T-cell (primary cell): ENCODE measurements at regions of chr1 and their contacts with region 1.

Region 1: GRCh38 chr1:198676253-198676652 is 37.4 kb downstream of the PTPRC start:
- DNase-seq: peak in 1 of 35 experiments; percentile 74
- ATAC-seq: peak in 2 of 4 experiments; percentile 18 to 32
- H3K4me3 ChIP-seq: peak overlapping the region; percentile 1 to 8
- H3K4me3 Mint-ChIP-seq: peak overlapping the region; percentile 69 to 76 (median 73)
- H3K27ac ChIP-seq: peak overlapping the region; percentile 94
- H3K27ac Mint-ChIP-seq: peak overlapping the region; percentile 91 to 99
- H3K4me1 ChIP-seq: peaks cover 39 to 69% of the 10 kb centered on the region in 2 experiments
- H3K4me1 Mint-ChIP-seq: peaks cover 85 to 92% (median 91%) of the 10 kb centered on the region in 3 donors
- H3K27me3 ChIP-seq: no peaks in the 10 kb centered on the region
- H3K27me3 Mint-ChIP-seq: no peaks in the 10 kb centered on the region

Region 2: GRCh38 chr1:198651650-198652400 is 24.4 kb before region 1 on chr1:
- CTCF ChIA-PET with region 1: interaction called, 5 to 31 read pairs
- POLR2A ChIA-PET with region 1: interaction called, 6 to 49 read pairs
- DNase-seq: no peak
- ATAC-seq: peak; percentile 27 to 34 (median 31)
- H3K4me3 ChIP-seq: peak overlapping the region in 1 of 2 donors; percentile 27
- H3K4me3 Mint-ChIP-seq: peak overlapping the region; percentile 63 to 81 (median 76)
- H3K27ac ChIP-seq: peak overlapping the region; percentile 87
- H3K27ac Mint-ChIP-seq: peak overlapping the region; percentile 94 to 98
- H3K4me1 ChIP-seq: peaks cover 20 to 80% of the 10 kb centered on the region in 2 experiments
- H3K4me1 Mint-ChIP-seq: peaks cover 81 to 85% (median 83%) of the 10 kb centered on the region in 3 donors
- H3K27me3 ChIP-seq: no peaks in the 10 kb centered on the region
- H3K27me3 Mint-ChIP-seq: no peaks in the 10 kb centered on the region

Region 3: GRCh38 chr1:198701766-198702539 is 25.7 kb after region 1 on chr1:
- CTCF ChIA-PET with region 1: no interaction called
- POLR2A ChIA-PET with region 1: no interaction called
- DNase-seq: no peak
- ATAC-seq: peak in 1 of 4 experiments; percentile 44
- H3K4me3 ChIP-seq: no peak overlapping the region
- H3K4me3 Mint-ChIP-seq: peak overlapping the region in 2 of 3 donors; percentile 1 to 9
- H3K27ac ChIP-seq: no peak overlapping the region
- H3K27ac Mint-ChIP-seq: peak overlapping the region; percentile 90 to 93
- H3K4me1 ChIP-seq: peaks cover 18 to 32% of the 10 kb centered on the region in 2 experiments
- H3K4me1 Mint-ChIP-seq: peaks cover 81 to 83% (median 81%) of the 10 kb centered on the region in 3 donors
- H3K27me3 ChIP-seq: no peaks in the 10 kb centered on the region
- H3K27me3 Mint-ChIP-seq: no peaks in the 10 kb centered on the region